Right cardiac atrium (tissue), 5 donors: ENCODE measurements at regions of chr10 and their contacts with region 1.

Region 1: GRCh38 chr10:47067949-47068940 is 157.0 kb downstream of the PTPN20 start:
- DNase-seq: no peak
- ATAC-seq: no peak
- H3K4me3 ChIP-seq: no peak overlapping the region
- H3K27ac ChIP-seq: no peak overlapping the region
- H3K4me1 ChIP-seq: no peaks in the 10 kb centered on the region
- H3K27me3 ChIP-seq: no peaks in the 10 kb centered on the region

Region 2: GRCh38 chr10:47294501-47294900 is 226.3 kb after region 1 on chr10:
- intact Hi-C with region 1: loop called in 1 of 4 experiments (anchors 5 kb)
- DNase-seq: no peak
- ATAC-seq: no peak
- H3K4me3 ChIP-seq: no peak overlapping the region
- H3K27ac ChIP-seq: no peak overlapping the region
- H3K4me1 ChIP-seq: no peaks in the 10 kb centered on the region
- H3K27me3 ChIP-seq: no peaks in the 10 kb centered on the region